HepG2 (cell line): ENCODE measurements at regions of chr19 and their contacts with region 1.

Region 1: GRCh38 chr19:10269333-10270179 is 1.4 kb upstream of the ICAM1 start:
- DNase-seq: peak; percentile 51
- ATAC-seq: peak; percentile 55
- H3K4me3 ChIP-seq: peak overlapping the region in 2 of 3 experiments; percentile 30 to 76; a peak in 3 of 6 replicates
- H3K27ac ChIP-seq: no peak overlapping the region
- H3K4me1 ChIP-seq: peaks cover 70% of the 10 kb centered on the region
- H3K27me3 ChIP-seq: no peaks in the 10 kb centered on the region
- CTCF ChIP-seq: peak; percentile 96
- EP300 ChIP-seq: no peak
- POLR2A ChIP-seq: no peak
- RAD21 ChIP-seq: peak; percentile 94

Region 2: GRCh38 chr19:10230861-10231611 is 38.5 kb before region 1 on chr19 and contains the start of gene S1PR2:
- CTCF ChIA-PET with region 1: no interaction called
- POLR2A ChIA-PET with region 1: no interaction called
- in situ Hi-C with region 1: no loop called
- intact Hi-C with region 1: no loop called
- DNase-seq: peak; percentile 36
- ATAC-seq: peak; percentile 71
- H3K4me3 ChIP-seq: peak within 1 kb of the TSS; percentile 72 to 77 (median 74)
- H3K27ac ChIP-seq: no peak within 1 kb of the TSS
- H3K4me1 ChIP-seq: peaks cover 40% of the 10 kb centered on the region
- H3K27me3 ChIP-seq: peaks cover 2 to 11% of the 10 kb centered on the region in 2 experiments; a peak in 4 of 5 replicates
- CTCF ChIP-seq: no peak
- EP300 ChIP-seq: no peak
- POLR2A ChIP-seq: no peak
- RAD21 ChIP-seq: no peak
- total RNA-seq, gene S1PR2: 0.93 and 1.3 TPM in 2 replicates

Region 3: DNA sequence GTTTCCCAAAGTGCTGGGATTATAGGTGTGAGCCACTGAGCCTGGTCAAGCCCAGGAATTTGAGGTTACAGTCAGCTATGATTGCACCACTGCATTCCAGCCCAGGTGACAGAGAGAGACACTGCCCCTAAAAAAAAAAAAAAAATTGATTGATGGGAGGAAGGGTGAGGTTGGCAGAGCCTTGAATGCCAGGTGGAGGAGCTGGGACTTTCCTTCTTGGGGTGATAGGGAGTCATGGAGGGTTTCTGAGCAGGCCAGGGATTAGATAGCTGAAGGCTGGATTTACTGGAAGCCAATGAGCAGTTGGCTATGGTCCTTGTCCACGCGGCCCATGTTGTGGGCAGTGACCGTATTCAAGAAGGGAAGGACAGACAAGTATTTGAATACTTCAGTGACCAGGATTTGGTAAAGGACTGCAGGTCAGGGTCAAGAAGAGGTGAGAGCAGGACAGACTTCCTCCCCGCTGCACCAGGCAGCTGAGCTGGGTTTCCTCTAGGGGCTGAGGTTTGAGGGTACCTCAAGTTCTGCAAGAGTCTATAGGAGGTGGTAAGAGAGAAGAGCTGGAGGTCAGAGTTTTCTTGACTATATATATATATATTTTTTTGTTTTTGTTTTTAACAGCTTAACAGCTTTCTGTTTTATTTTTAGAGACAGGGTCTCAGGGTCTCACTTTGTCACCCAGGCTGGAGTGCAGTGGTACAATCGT is 10.3 kb after region 1 on chr19:
- CTCF ChIA-PET with region 1: no interaction called
- POLR2A ChIA-PET with region 1: interaction called, 23 read pairs
- in situ Hi-C with region 1: no loop called
- intact Hi-C with region 1: no loop called
- DNase-seq: no peak
- ATAC-seq: no peak
- H3K4me3 ChIP-seq: no peak overlapping the region
- H3K27ac ChIP-seq: no peak overlapping the region
- H3K4me1 ChIP-seq: no peaks in the 10 kb centered on the region
- H3K27me3 ChIP-seq: no peaks in the 10 kb centered on the region
- CTCF ChIP-seq: no peak
- EP300 ChIP-seq: no peak
- POLR2A ChIP-seq: no peak
- RAD21 ChIP-seq: no peak

Region 4: GRCh38 chr19:10292206-10292788 is 22.7 kb after region 1 on chr19:
- CTCF ChIA-PET with region 1: no interaction called
- POLR2A ChIA-PET with region 1: interaction called, 149 read pairs
- in situ Hi-C with region 1: no loop called
- intact Hi-C with region 1: loop called (anchors 2 kb)
- DNase-seq: peak; percentile 27
- ATAC-seq: peak; percentile 8
- H3K4me3 ChIP-seq: peak overlapping the region; percentile 52 to 79 (median 62)
- H3K27ac ChIP-seq: no peak overlapping the region
- H3K4me1 ChIP-seq: peaks cover 64% of the 10 kb centered on the region
- H3K27me3 ChIP-seq: peaks cover 0 to 20% of the 10 kb centered on the region in 2 experiments; a peak in 3 of 5 replicates
- CTCF ChIP-seq: no peak
- EP300 ChIP-seq: no peak
- POLR2A ChIP-seq: no peak
- RAD21 ChIP-seq: no peak

Region 5: DNA sequence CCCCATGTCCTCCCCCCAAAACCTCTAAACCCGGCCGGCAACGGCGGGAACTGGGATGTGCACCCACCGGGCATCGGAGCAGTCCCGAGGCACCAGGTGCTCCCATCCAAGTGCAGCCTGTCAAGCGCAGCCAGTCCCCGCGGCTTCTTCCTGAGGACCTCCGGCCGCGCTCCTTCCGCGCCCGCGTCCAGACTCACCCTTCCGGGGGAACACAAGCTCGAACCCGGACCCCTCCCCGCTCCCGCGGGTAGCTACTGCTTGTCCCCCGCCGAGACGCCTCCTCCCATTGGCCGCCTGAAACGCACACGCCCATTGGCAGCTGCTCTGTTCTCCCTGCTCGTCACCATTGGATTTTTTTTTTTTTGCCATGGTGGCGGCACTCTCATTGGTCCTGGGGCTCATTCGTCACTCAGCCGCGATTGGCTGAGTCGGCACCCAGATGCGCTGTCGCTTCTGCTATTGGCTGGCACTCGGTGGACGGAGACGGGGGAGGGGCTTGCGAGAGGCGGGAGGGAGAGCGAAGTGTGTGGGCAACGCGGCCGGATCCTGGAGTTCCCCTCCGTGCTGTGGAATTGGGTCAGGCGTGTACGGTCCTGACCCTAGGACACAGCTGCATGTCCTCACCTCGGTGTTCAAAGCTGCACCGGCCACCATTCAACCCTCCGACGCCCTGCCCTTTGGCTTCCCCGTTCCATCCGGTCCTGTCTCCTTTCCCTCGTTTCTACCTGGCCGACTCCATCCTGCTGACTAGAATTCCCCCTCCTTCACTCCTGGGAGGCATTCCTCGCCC is 111.0 kb after region 1 on chr19 and contains the start of gene TYK2:
- CTCF ChIA-PET with region 1: no interaction called
- POLR2A ChIA-PET with region 1: interaction called, 61 read pairs
- in situ Hi-C with region 1: no loop called
- intact Hi-C with region 1: no loop called
- DNase-seq: peak; percentile 97
- ATAC-seq: peak; percentile 93
- H3K4me3 ChIP-seq: peak within 1 kb of the TSS; percentile 90 to 98 (median 91)
- H3K27ac ChIP-seq: peak within 1 kb of the TSS; percentile 80
- H3K4me1 ChIP-seq: peaks cover 39% of the 10 kb centered on the region
- H3K27me3 ChIP-seq: no peaks in the 10 kb centered on the region; a peak in 1 of 5 replicates
- CTCF ChIP-seq: no peak
- EP300 ChIP-seq: peak in 1 of 2 experiments; percentile 6; a peak in 1 of 4 replicates
- POLR2A ChIP-seq: peak; percentile 79 to 91
- RAD21 ChIP-seq: 0 out of 2 replicates have a peak, but pooled peaks have one; percentile 16
- total RNA-seq, gene TYK2: 39.9 and 60.1 TPM in 2 replicates

Region 6: GRCh38 chr19:10403137-10404021 is 133.8 kb after region 1 on chr19 and contains the start of gene CDC37:
- CTCF ChIA-PET with region 1: no interaction called
- POLR2A ChIA-PET with region 1: interaction called, 13 read pairs
- in situ Hi-C with region 1: no loop called
- intact Hi-C with region 1: no loop called
- DNase-seq: peak; percentile 89
- ATAC-seq: peak; percentile 85
- H3K4me3 ChIP-seq: peak within 1 kb of the TSS; percentile 87 to 93 (median 90)
- H3K27ac ChIP-seq: peak within 1 kb of the TSS; percentile 62
- H3K4me1 ChIP-seq: peaks cover 17% of the 10 kb centered on the region
- H3K27me3 ChIP-seq: peaks cover 0 to 27% of the 10 kb centered on the region in 2 experiments; a peak in 4 of 5 replicates
- CTCF ChIP-seq: no peak
- EP300 ChIP-seq: no peak
- POLR2A ChIP-seq: peak; percentile 89 to 96
- RAD21 ChIP-seq: no peak
- total RNA-seq, gene CDC37: 134 and 158 TPM in 2 replicates